BJ (cell line): ENCODE measurements at regions of chr1 and their contacts with region 1.

Region 1: GRCh38 chr1:67149179-67149770 is 14.5 kb upstream of the C1orf141 start:
- DNase-seq: peak; percentile 16
- H3K4me3 ChIP-seq: no peak overlapping the region
- H3K27me3 ChIP-seq: no peaks in the 10 kb centered on the region; the same call in 1 of the 2 replicates
- CTCF ChIP-seq: peak; percentile 86

Region 2: GRCh38 chr1:66758241-66758755 is 391.0 kb before region 1 on chr1:
- CTCF ChIA-PET with region 1: interaction called, 48 read pairs
- POLR2A ChIA-PET with region 1: no interaction called
- DNase-seq: no peak
- H3K4me3 ChIP-seq: no peak overlapping the region
- H3K27me3 ChIP-seq: no peaks in the 10 kb centered on the region
- CTCF ChIP-seq: no peak

Region 3: DNA sequence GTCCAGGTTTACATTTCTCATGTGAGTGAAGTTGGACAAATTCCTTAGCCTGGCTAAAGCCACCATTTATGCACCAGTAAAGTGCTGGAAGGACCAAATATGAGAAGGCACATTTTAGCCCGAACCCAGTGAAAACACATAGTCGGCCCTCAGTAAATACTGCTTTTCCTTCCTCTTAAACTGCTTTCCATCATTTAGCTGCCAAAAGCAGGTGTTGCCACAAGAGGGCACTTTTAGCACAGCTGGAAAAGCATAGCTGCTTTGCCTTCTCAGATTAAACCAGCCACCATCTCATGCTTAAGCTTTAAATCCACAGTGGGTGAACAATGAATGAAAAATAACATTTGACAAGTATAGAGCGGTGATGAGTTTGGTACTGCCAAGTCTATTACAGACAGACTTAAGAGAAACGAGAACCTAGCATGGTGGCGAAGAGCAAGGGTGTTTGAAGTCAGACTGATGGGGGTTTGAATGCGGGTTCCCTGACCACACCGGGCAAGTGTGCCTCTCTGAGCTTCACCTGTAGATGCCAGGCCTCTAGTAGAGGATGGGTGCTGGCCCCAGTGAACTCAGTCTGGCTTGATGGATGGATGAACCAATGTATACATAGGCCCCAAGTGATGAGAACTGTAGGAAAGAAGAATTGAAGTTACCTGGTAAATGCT is 153.1 kb before region 1 on chr1:
- CTCF ChIA-PET with region 1: interaction called, 143 read pairs
- POLR2A ChIA-PET with region 1: no interaction called
- DNase-seq: no peak
- H3K4me3 ChIP-seq: no peak overlapping the region
- H3K27me3 ChIP-seq: no peaks in the 10 kb centered on the region
- CTCF ChIP-seq: peak; percentile 84

Region 4: GRCh38 chr1:67029472-67029871 is 119.8 kb before region 1 on chr1:
- CTCF ChIA-PET with region 1: interaction called, 13 read pairs
- POLR2A ChIA-PET with region 1: no interaction called
- DNase-seq: no peak
- H3K4me3 ChIP-seq: no peak overlapping the region
- H3K27me3 ChIP-seq: no peaks in the 10 kb centered on the region
- CTCF ChIP-seq: no peak

Region 5: DNA sequence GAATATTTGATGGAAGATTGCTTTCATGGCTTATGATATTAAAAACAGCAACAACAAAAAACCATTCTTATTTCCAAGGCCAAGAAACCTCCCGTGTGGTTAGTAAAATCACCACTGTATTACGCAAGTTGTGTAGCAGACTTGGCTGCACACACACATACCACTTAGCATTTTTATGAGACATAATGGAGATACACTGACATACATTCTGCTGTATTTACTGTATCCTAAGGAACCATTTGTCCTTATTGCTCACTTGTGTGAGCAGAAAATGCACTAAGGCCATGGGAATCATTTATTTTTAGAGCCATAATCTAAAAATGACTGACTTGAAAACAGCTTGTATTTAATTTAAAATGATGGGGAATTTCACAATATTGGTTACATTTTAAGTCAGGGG is 13.9 kb before region 1 on chr1:
- CTCF ChIA-PET with region 1: interaction called, 29 read pairs
- POLR2A ChIA-PET with region 1: no interaction called
- DNase-seq: peak; percentile 83
- H3K4me3 ChIP-seq: no peak overlapping the region
- H3K27me3 ChIP-seq: no peaks in the 10 kb centered on the region
- CTCF ChIP-seq: no peak

Region 6: DNA sequence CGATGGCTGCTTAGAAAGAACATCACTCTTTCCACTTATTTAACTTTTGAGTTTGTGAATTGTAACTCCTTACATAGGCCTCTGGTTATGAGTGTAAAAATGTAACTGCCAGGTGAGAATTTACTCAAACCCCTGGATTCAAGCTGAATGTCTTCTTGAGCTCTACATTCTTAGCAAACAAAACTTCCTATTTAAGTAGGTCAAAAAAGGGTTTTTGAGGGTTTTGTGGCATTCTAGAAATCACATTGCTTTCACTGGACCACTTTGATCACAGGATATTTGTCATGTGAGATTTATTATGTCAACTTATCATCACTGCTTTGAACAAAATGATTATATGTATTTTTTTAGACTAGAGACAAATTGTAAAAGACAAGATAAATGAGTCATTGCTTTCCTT is 22.7 kb after region 1 on chr1:
- CTCF ChIA-PET with region 1: no interaction called
- POLR2A ChIA-PET with region 1: no interaction called
- DNase-seq: no peak
- H3K4me3 ChIP-seq: no peak overlapping the region
- H3K27me3 ChIP-seq: 0 out of 2 replicates have a peak, but pooled peaks cover 1% of the 10 kb centered on the region
- CTCF ChIP-seq: no peak